Activated CD4-positive, alpha-beta memory T cell treated with anti-CD3 and anti-CD28 coated beads for 36 hours (primary cell): ENCODE measurements at regions of chr17 and their contacts with region 1.

Region 1: GRCh38 chr17:57995076-57995956 is 7.3 kb upstream of the VEZF1 start:
- DNase-seq: peak; percentile 76
- H3K4me3 Mint-ChIP-seq: no peak overlapping the region
- H3K27ac Mint-ChIP-seq: peak overlapping the region; percentile 47
- H3K4me1 Mint-ChIP-seq: peaks cover 69% of the 10 kb centered on the region
- H3K27me3 Mint-ChIP-seq: no peaks in the 10 kb centered on the region

Region 2: DNA sequence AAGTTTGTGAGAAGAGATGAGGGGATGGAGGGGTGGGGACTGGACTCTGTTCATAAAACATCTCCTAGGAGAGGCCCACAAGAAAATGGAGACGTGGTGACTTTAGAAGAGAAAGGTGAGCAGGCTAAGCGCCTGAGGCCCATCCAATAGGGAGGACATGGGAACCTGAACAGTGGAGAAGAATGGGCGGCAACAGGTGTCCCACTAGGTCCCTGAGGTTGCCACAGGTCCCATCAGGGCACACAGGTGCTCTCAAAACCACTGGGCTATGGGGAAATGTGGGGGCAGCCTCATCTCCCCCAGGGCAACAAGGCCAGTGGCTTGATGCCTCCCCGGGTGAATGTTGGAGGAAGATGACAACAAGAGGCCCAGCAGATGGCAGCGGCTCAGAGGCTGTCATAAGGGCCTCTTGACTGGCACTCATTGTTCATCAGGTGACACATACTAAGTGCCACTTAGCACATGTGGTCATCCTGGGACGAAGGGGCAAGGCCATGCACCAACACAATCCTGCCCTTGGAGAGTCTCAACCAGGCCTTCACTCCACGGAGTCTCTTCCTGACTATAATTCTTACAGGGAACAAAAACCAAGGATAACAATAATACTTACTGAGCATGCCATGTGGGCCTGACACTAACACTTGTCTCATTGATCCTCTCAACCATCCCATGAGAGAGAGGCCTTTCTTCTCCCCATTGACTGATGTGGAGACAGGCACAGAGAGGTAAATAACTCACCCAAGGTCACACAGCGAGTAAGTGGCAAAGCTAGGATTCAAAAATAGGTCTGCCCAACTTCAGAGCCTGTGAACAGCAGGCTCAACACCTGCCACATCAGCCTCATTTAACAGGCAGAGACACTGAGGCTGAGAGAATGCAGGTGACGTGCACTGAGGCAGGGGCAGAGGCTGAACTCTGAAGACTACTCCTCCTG is 78.1 kb before region 1 on chr17:
- CTCF ChIA-PET with region 1: interaction called, 5 read pairs
- POLR2A ChIA-PET with region 1: no interaction called
- intact Hi-C with region 1: loop called (anchors 1 kb)
- DNase-seq: peak; percentile 36
- H3K4me3 Mint-ChIP-seq: no peak overlapping the region
- H3K27ac Mint-ChIP-seq: no peak overlapping the region
- H3K4me1 Mint-ChIP-seq: no peaks in the 10 kb centered on the region
- H3K27me3 Mint-ChIP-seq: peaks cover 2% of the 10 kb centered on the region

Region 3: GRCh38 chr17:57946798-57947358 is 48.4 kb before region 1 on chr17:
- CTCF ChIA-PET with region 1: interaction called, 10 read pairs
- POLR2A ChIA-PET with region 1: interaction called, 9 read pairs
- intact Hi-C with region 1: loop called (anchors 2 kb)
- DNase-seq: peak; percentile 56
- H3K4me3 Mint-ChIP-seq: peak overlapping the region; percentile 33
- H3K27ac Mint-ChIP-seq: no peak overlapping the region
- H3K4me1 Mint-ChIP-seq: peaks cover 34% of the 10 kb centered on the region
- H3K27me3 Mint-ChIP-seq: peaks cover 9% of the 10 kb centered on the region

Region 4: DNA sequence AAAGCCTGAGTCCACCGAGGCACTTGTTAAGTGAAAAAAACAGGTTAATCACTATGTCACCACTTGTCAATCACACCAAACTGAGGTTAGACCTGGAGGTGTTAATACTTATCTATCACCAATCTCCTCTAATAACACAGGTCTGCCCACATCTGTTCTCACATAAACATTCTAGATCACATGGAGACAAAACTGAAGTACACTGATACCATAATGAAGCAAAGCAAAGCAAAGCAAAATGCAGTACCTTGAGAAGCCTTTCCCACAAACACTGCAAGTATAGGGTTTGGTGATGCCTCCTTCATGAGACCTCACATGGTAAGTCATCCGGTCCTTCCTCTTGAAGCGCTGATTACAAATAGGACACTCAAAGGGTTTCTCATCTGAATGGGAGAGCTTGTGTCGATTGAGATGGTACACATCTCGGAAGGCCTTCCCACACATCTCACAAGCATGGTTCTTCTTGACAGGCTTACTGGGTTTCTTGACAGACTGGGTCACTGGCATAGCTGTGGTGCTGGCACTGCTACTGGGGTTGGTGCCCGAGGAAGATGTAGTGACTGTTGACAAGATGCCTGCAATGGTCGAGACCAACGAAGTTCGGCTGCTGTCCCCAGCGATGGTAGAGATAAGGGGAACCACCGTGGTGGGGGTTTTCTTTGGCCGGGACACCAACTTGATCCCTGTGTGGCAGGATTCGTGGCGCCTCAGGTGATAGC is 12.7 kb before region 1 on chr17:
- CTCF ChIA-PET with region 1: interaction called, 21 read pairs
- POLR2A ChIA-PET with region 1: interaction called, 9 read pairs
- intact Hi-C with region 1: loop called (anchors 1 kb)
- DNase-seq: no peak
- H3K4me3 Mint-ChIP-seq: no peak overlapping the region
- H3K27ac Mint-ChIP-seq: no peak overlapping the region
- H3K4me1 Mint-ChIP-seq: peaks cover 56% of the 10 kb centered on the region
- H3K27me3 Mint-ChIP-seq: no peaks in the 10 kb centered on the region

Region 5: DNA sequence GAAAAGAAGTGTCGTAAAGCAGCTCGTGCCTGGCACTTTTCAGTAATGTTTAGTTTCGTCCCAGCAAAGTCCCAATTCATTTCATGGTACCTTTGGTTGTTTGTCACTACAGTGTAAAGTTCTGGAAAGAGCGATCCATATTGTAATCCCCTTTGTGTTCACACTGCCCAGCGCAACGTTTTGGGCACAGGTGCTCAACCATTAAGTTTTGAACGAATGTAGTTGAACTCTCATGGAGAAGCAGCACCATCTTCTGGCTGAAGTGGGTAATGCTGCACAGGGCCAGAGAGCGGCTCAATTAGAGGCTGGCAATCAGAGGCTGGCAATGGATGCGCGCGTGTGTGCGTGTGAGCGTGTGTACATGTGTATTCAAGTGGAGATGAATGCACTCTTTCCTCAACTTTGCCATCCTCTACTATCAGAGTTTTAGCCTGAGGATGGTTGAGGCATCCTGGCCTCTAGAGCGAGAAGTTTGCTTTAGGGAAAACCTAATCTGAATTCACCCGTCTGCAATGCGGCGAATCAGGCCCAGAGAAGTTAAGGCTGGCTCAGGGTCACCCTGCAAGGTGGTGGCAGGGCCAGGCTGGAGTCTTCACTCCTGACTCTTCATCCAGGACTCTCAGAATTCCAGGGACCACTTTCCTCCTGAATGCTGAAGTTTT is 117.8 kb after region 1 on chr17:
- CTCF ChIA-PET with region 1: interaction called, 23 read pairs
- POLR2A ChIA-PET with region 1: no interaction called
- intact Hi-C with region 1: loop called (anchors 2 kb)
- DNase-seq: peak; percentile 89
- H3K4me3 Mint-ChIP-seq: no peak overlapping the region
- H3K27ac Mint-ChIP-seq: no peak overlapping the region
- H3K4me1 Mint-ChIP-seq: peaks cover 4% of the 10 kb centered on the region
- H3K27me3 Mint-ChIP-seq: peaks cover 2% of the 10 kb centered on the region